Activated CD8-positive, alpha-beta T cell treated with anti-CD3 and anti-CD28 coated beads for 36 hours (primary cell): ENCODE measurements at regions of chr4 and their contacts with region 1.

Region 1: DNA sequence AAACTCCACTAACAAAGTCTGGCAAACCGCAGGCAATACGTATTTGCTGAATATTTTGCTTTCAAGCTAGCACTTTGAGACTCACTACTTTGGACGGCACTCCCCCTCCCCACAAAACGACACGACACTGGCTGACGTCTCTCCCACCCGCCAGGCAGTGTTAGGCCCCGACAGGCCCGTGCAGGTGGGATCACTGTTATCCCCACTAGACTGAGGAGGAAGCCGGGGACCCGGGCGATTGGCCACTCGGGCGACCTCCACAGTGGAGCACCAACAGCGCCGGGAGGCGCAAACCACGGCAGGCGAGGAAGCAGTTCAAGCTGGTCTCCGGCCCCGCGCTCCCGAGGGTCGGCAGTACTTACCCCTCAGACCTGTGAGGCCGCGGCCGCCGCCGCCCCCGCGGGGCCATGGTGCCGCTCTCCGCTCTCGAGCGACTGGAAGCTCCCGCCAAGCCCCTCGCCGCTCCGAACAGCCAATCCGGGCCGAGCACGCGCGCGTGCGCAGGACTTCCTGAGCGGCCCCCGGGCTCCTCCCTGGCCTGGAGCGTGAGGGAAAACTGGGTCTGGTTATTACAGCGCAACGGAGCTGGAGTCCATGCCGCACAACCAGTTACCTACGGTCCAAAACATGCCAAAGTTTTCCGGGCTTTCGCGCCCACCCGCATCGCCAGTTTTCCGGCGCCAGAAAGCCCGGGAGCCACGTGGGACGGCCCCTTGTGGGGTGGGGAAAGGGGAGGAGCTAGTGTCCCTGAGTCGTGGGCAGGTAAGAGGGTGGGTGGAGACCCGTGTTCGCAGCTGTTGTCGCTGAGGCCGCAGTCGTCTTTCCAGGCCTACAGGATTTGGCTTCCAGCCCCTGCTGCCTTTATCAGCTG is at the start of gene CENPU:
- DNase-seq: peak; percentile 96
- ATAC-seq: peak; percentile 97
- H3K4me3 Mint-ChIP-seq: peak within 1 kb of the TSS; percentile 89
- H3K27ac Mint-ChIP-seq: peak within 1 kb of the TSS; percentile 86
- H3K4me1 Mint-ChIP-seq: peaks cover 21% of the 10 kb centered on the region
- H3K27me3 Mint-ChIP-seq: no peaks in the 10 kb centered on the region
- CTCF ChIP-seq: no peak
- total RNA-seq, gene CENPU: 49.7 to 53.4 TPM

Region 2: GRCh38 chr4:184474263-184475095 is 259.4 kb before region 1 on chr4 and contains the start of gene IRF2:
- CTCF ChIA-PET with region 1: no interaction called
- POLR2A ChIA-PET with region 1: interaction called, 12 read pairs
- intact Hi-C with region 1: no loop called
- DNase-seq: peak; percentile 98
- ATAC-seq: peak; percentile 83
- H3K4me3 Mint-ChIP-seq: peak within 1 kb of the TSS; percentile 94
- H3K27ac Mint-ChIP-seq: peak within 1 kb of the TSS; percentile 98
- H3K4me1 Mint-ChIP-seq: peaks cover 50% of the 10 kb centered on the region
- H3K27me3 Mint-ChIP-seq: no peaks in the 10 kb centered on the region
- CTCF ChIP-seq: no peak
- total RNA-seq, gene IRF2: 48.1 to 56.4 TPM

Region 3: DNA sequence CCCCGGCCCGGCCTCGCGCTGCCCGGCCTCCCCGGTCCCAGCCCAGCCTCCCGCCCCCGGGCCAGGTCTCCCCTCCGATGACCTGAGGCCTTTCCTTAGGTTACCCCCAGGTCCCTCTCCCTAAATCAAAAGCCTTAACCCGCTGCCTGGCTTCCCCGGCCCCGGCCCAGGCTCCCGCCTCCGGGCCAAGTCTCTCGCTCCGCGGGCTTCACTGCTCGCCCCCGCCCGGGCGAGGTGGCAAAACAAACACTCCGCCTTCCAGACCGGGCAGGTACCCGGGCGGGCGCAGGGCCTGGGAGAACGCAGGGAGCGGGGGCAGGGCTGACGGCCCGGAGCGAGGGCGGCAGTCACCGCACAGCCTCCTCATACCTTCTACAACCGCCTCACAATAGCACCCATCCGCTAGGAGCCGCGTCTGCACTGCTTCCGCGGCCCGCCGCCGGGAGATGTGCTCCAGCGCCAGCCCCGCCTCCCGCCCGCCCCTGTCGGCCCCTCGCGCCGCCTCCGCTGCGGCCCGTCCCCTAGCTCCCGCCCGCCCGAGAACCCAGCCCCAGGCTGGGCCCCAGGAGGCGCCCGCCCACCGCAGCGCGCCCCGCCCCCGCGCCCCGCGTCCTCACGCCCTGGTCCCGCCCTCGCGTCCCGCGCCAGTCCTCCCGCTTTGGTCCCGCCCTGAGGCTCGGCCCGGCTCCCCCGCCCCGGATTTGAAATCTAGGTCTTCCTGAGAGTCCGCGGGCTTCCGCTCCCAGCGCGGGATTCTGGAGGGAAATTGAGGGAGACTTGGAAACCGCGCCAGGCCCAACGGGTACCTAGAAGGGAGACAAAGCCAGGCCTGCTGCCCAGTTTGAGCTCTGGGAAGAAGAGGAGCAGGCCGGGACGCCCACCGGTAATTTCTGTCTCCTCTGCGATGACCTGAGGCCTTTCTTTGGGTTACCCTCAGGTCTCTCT is 84.6 kb before region 1 on chr4 and contains the starts of genes CASP3 and PRIMPOL:
- CTCF ChIA-PET with region 1: interaction called, 4 read pairs
- POLR2A ChIA-PET with region 1: interaction called, 34 read pairs
- intact Hi-C with region 1: loop called (anchors 5 kb)
- DNase-seq: peak; percentile 95
- ATAC-seq: peak; percentile 83
- H3K4me3 Mint-ChIP-seq: peak within 1 kb of the TSS; percentile 94
- H3K27ac Mint-ChIP-seq: peak within 1 kb of the TSS; percentile 92
- H3K4me1 Mint-ChIP-seq: peaks cover 46% of the 10 kb centered on the region
- H3K27me3 Mint-ChIP-seq: no peaks in the 10 kb centered on the region
- CTCF ChIP-seq: no peak
- total RNA-seq, gene CASP3: 96.9 to 100 TPM
- total RNA-seq, gene PRIMPOL: 16.9 to 17.3 TPM

Region 4: DNA sequence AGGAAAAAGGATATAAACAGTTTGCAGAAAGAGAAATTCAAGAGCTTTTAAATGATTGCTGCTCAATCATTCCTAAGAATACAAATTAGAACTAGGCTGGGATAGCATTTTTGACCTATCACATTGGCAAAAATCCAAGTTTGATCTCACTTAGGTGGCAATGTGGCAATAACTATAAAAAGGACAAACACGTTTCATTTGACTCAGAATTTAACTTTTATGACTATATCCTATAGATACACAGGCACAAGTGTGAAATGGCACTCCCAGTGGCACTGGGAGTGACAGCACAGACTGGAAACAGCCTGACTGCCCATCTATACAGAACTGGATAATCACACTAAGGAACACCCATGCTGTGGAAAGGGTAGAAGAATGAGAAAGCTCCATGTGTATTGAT is 11.1 kb before region 1 on chr4:
- CTCF ChIA-PET with region 1: interaction called, 3 read pairs
- POLR2A ChIA-PET with region 1: interaction called, 21 read pairs
- intact Hi-C with region 1: no loop called
- DNase-seq: no peak
- ATAC-seq: no peak
- H3K4me3 Mint-ChIP-seq: no peak overlapping the region
- H3K27ac Mint-ChIP-seq: no peak overlapping the region
- H3K4me1 Mint-ChIP-seq: peaks cover 8% of the 10 kb centered on the region
- H3K27me3 Mint-ChIP-seq: no peaks in the 10 kb centered on the region
- CTCF ChIP-seq: no peak

Region 5: DNA sequence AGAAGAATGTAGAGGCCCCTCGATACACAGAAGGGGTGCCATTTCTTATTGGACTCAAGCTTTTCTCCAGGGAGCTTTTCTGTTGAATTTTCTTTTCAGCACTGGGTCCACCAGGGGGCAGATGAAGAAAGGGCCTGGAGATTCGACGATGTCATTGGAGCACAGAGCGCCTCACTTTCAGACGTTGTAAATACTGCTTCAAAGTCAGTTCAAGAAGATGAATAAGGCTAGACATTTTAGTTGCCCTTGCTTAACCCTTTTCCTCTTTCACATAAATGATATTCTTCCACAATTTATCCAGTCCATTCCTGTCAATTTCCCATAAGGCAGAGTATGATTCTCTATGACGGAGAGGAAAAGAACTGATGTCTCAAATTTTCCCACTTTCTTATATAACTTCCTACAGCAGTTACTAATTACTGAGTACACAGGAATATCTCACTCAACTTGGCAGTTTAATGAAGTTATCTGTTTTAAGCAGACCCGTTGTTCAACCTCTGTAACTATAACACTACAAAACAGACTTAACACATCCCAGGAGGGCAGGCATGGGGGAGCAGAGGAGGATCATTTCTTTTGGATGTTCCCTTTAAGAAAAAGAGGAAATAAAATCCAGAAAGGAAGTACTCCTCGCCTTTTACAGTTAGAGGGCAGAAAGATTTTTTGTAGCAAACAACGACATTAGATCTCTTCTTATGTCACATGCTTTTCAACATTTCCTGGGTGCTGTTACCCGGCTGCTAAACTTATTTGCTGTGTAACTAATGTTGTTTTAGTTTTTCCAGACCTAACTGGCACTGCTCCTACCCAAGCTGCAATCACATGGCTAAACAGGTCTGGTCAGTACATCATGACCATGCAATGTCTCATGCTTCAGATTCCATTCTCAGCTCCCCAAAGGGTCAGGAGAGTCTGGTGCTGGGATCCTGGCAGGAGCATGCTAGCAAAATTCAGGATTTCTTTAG is 12.2 kb after region 1 on chr4:
- CTCF ChIA-PET with region 1: interaction called, 26 read pairs
- POLR2A ChIA-PET with region 1: interaction called, 9 read pairs
- intact Hi-C with region 1: no loop called
- DNase-seq: peak; percentile 86
- ATAC-seq: peak; percentile 91
- H3K4me3 Mint-ChIP-seq: no peak overlapping the region
- H3K27ac Mint-ChIP-seq: no peak overlapping the region
- H3K4me1 Mint-ChIP-seq: peaks cover 10% of the 10 kb centered on the region
- H3K27me3 Mint-ChIP-seq: no peaks in the 10 kb centered on the region
- CTCF ChIP-seq: peak; percentile 83

Region 6: GRCh38 chr4:184762100-184762499 is 28.2 kb after region 1 on chr4:
- CTCF ChIA-PET with region 1: no interaction called
- POLR2A ChIA-PET with region 1: interaction called, 14 read pairs
- intact Hi-C with region 1: no loop called
- DNase-seq: peak; percentile 53
- ATAC-seq: peak; percentile 99
- H3K4me3 Mint-ChIP-seq: peak overlapping the region; percentile 50
- H3K27ac Mint-ChIP-seq: peak overlapping the region; percentile 88
- H3K4me1 Mint-ChIP-seq: peaks cover 20% of the 10 kb centered on the region
- H3K27me3 Mint-ChIP-seq: no peaks in the 10 kb centered on the region
- CTCF ChIP-seq: no peak

Region 7: DNA sequence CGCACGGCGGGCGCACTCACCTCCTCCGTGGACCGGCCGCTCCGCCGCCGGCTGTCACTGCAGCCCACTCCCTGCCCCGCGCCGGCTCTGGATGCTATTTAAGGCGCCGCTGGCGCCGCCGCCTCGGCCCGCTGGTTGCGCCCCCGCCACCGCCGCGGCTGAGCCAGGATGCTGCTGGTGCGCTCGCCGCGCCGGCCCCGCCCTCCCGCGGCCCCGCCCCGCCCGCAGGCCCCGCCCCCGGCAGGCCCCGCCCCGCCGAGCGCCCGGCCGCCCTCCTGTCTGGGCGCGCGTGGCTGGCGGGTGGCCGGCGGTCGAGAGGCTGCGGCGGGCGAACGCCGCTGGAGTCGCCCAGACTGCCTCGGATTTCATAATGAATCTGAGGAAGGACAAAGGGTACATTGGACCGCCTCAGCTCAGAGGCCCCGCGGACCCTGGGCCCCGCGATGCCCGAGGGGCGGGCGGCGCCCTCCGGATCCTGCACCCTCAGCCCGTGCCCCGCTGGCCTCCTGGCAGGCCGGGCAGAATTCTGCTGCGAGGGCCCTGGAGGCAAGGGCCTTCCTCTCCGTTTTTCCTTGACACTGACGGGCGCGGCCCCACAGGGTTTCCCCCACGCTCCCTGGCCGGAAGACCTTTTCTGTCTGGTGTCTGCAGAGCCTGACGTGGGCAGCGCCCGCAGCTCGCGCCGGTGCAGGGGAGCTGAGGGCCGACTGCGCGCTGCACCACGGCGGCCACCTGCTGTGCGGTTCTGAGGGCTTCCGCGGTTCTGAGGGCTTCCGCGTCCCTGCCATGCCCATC is 92.2 kb after region 1 on chr4 and contains the start of gene ACSL1:
- CTCF ChIA-PET with region 1: no interaction called
- POLR2A ChIA-PET with region 1: interaction called, 15 read pairs
- intact Hi-C with region 1: no loop called
- DNase-seq: peak; percentile 81
- ATAC-seq: peak; percentile 87
- H3K4me3 Mint-ChIP-seq: peak within 1 kb of the TSS; percentile 84
- H3K27ac Mint-ChIP-seq: peak within 1 kb of the TSS; percentile 85
- H3K4me1 Mint-ChIP-seq: peaks cover 44% of the 10 kb centered on the region
- H3K27me3 Mint-ChIP-seq: no peaks in the 10 kb centered on the region
- CTCF ChIP-seq: no peak
- total RNA-seq, gene ACSL1: 12.8 to 13.1 TPM